ENCODE measurements at regions of chr4 and their contacts with region 1.

Region 1: DNA sequence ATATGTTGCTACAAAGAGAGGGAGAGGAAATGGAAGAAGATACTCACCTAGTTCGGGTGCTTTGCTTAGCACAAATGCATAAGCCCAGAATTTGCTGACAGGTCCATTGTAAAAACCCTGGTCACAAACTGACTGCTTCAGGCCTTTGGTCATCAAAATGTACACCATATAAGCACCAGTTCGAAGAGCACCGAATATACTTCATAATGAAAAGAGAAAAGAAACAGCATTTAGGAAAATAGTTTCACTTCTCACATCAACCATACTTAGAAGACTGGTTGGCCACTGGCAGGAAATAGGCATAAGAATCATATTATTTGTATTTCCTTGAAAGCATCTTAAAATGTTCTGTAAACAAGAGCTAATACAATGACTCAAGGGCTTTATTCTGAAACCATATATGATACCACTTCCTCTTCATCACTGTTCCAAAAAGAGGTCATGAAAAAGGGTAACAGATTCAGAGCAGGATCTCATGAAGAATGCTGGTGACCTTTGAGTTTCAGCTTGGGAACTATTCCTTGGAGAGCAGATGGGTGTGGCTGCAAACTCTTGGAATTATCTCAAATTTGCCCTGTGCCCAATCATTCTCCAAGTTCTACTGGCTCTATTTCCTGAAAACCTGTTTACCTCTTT is 138.7 kb downstream of the ELOVL6 start:
- DNase-seq: no peak
- ATAC-seq: no peak
- H3K4me3 ChIP-seq: no peak overlapping the region
- H3K27ac ChIP-seq: peak overlapping the region in 1 of 3 donors; percentile 24
- H3K4me1 ChIP-seq: peaks cover 0 to 71% (median 18%) of the 10 kb centered on the region in 4 donors
- H3K27me3 ChIP-seq: no peaks in the 10 kb centered on the region
- CTCF ChIP-seq: no peak
- POLR2A ChIP-seq: no peak

Region 2: DNA sequence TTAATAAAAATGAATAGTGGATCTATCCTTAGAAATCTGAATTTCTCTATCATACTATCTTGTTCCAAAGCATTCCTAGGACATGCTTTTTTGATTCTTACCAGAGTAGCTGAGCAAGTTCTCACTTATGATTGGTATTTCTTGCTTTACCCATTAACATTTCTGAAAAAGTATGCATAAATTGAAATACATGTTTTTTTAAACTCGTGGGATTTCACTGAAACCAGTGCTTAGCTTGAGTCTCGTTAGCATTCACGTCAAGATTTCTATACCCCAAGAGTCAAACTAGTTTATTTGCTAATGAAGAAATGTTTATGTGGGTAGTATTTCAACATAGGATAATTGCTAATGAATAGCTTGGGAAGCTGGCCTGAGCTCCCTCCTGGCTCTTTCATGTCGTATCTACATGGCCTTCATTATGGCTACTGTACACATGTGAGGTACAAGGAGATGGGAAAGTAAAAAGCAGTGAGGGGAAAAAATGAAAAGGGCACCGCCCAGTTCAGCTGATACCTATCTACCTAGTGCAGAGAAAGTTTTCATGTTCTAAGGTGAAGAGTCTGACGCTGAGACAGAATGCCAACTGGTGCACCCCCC is 49.9 kb after region 1 on chr4:
- intact Hi-C with region 1: no loop called
- DNase-seq: no peak
- ATAC-seq: no peak
- H3K4me3 ChIP-seq: no peak overlapping the region
- H3K27ac ChIP-seq: no peak overlapping the region
- H3K4me1 ChIP-seq: peaks cover 0 to 28% (median 8%) of the 10 kb centered on the region in 4 donors
- H3K27me3 ChIP-seq: no peaks in the 10 kb centered on the region
- CTCF ChIP-seq: no peak
- POLR2A ChIP-seq: no peak

Region 3: GRCh38 chr4:110208419-110208818 is 148.7 kb after region 1 on chr4:
- intact Hi-C with region 1: loop called in 1 of 2 experiments (anchors 5 kb)
- DNase-seq: no peak
- ATAC-seq: peak in 2 of 4 donors; percentile 51 to 57
- H3K4me3 ChIP-seq: no peak overlapping the region
- H3K27ac ChIP-seq: peak overlapping the region in 2 of 3 donors; percentile 41 to 43
- H3K4me1 ChIP-seq: peaks cover 0 to 30% (median 11%) of the 10 kb centered on the region in 4 donors
- H3K27me3 ChIP-seq: no peaks in the 10 kb centered on the region
- CTCF ChIP-seq: no peak
- POLR2A ChIP-seq: no peak

Measured in right lobe of liver (tissue), 6 donors.